Posterior cingulate gyrus (tissue), 11 donors: ENCODE measurements at regions of chr12 and their contacts with region 1.

Region 1: DNA sequence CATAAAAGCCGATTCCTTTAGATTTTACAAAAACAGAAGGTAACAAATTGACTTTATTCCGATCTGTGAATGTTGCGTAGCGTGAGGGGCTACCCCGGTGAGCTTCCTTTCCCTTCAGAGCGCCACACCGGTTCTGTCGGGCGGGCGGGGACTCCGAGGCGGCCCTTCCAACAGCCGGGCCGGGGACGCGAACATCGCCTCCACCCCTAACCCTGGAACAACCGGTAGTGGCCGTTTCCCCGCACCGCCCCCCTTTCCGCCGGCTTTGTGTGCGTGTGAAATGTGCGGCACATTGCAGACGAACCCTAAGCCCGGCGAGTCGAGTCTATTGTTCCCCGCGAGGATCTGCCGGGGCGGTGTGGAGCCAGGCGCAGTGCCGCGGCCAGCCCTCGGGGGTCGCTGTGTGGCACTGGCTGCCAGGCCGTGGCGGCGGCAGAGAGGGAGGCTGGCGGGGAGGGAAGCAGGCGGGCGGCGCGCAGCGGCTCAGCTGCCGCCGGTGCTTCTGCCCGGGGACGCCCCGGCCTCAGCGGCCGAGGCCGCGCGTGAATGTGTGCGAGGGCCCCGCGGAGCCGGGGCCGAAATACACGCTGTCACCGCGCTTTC is 775 bp upstream of the ARID2 start:
- DNase-seq: peak; percentile 93 to 99 (median 96)

Region 2: GRCh38 chr12:45215419-45216229 is 513.1 kb before region 1 on chr12 and contains the start of gene ANO6:
- intact Hi-C with region 1: loop called (anchors 5 kb)
- DNase-seq: peak; percentile 70 to 97 (median 81)

Region 3: DNA sequence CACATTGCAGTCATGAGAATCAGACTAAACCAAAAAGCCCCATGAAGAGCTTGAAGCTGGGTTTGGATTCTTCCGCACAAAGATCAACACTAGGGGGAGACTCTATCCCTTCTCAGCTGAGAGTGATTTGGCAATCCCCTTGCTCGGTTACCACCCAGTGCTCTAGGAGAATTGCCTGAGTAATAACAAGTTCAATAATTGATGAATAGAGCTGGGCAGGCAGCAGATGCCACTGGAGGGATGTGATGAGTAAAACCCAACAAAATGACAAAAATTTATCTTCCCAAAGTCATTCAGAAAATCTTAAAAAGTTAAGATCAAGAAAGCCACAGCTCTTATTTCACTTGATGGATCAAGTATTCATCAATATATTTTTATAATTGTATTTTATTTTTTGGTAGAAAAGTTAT is 184.8 kb before region 1 on chr12:
- intact Hi-C with region 1: loop called (anchors 5 kb)
- DNase-seq: peak in 3 of 10 donors; percentile 6 to 35 (median 11)

Region 4: DNA sequence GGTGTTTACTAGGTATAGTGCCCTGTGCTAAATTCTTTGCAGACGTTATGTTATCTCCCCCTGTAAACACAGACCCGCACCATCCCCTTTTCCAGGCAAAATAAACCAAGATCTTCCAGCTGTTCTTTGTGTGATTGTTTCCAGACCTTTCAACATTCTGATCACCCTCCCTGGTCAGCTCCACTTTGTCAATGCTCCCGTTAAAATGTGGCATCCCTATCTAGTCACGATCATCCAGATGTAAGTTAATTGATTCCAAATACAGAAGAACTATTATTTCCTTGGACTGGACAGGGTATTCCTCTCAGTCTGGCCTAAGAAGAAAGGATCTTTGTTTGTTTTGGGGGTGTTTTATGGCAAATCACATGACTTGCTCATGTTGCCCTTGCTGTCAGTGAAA is 126.8 kb before region 1 on chr12:
- intact Hi-C with region 1: loop called (anchors 10 kb)
- DNase-seq: no peak

Region 5: DNA sequence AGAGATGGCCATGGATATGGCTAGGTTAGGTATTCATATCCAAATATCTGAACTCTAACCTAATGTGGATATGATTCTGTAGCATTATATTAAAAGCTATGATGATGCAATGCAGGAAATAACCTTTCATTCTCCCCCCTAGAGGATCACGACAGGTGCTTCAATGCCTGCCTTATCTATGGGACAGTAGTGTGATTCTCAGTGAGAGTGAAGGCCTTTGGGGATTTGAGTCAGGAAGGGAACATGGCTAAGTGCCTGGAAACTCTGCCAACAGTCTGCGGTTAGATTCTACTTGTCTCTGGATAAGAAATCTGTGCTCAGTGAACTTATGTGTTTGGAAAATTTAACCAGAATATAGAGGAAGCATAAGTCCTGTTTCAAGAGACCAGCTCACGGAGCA is 458.3 kb after region 1 on chr12:
- intact Hi-C with region 1: no loop called
- DNase-seq: peak in 2 of 10 donors; percentile 11 to 16